CD4-positive, alpha-beta memory T cell (primary cell): ENCODE measurements at regions of chr10 and their contacts with region 1.

Region 1: DNA sequence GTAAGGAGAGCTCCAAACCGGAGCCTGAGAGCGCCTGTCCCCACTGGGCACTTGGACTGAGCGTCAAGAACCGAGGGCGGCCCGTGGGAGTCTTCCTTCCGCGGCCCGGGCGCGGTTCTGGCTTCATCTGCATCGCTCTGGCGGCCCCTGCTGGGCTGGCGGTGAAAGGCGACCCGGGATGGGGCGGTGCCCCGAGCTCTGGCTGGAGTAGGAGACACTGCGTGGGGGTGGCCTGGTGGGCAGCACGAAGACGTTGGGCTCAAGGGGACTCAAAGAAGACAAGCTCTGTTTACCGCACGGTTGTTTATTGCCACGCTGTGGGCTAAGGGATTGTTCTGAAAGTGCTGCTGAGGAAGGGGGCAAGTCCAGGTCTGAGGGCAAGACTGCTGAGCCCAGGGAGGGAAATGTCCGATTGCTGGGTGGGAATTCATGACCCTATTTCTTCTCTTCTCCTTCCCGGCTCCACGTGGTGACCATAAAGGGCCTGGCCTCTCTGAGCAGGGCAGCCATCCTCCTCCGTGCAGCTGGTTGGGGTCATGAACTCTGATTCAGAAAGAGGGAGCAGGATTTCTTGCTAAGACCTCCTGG is 29.8 kb downstream of the PLAU start:
- DNase-seq: peak; percentile 78 to 85 (median 79)
- H3K4me3 ChIP-seq: no peak overlapping the region
- H3K4me3 Mint-ChIP-seq: peak overlapping the region in 7 of 8 donors; percentile 49 to 79 (median 66)
- H3K27ac ChIP-seq: no peak overlapping the region
- H3K27ac Mint-ChIP-seq: peak overlapping the region in 5 of 7 donors; percentile 37 to 82 (median 74)
- H3K4me1 ChIP-seq: peaks cover 10% of the 10 kb centered on the region
- H3K4me1 Mint-ChIP-seq: peaks cover 6 to 9% (median 8%) of the 10 kb centered on the region in 4 donors
- H3K27me3 ChIP-seq: no peaks in the 10 kb centered on the region
- H3K27me3 Mint-ChIP-seq: peaks cover 0 to 2% of the 10 kb centered on the region in 2 donors

Region 2: GRCh38 chr10:73827346-73828089 is 113.2 kb before region 1 on chr10:
- CTCF ChIA-PET with region 1: interaction called, 10 read pairs
- POLR2A ChIA-PET with region 1: no interaction called
- intact Hi-C with region 1: no loop called
- DNase-seq: no peak
- H3K4me3 ChIP-seq: no peak overlapping the region
- H3K4me3 Mint-ChIP-seq: no peak overlapping the region
- H3K27ac ChIP-seq: no peak overlapping the region
- H3K27ac Mint-ChIP-seq: peak overlapping the region in 1 of 7 donors; percentile 29
- H3K4me1 ChIP-seq: no peaks in the 10 kb centered on the region
- H3K4me1 Mint-ChIP-seq: peaks cover 0 to under 1% (median 0%) of the 10 kb centered on the region in 4 donors
- H3K27me3 ChIP-seq: no peaks in the 10 kb centered on the region
- H3K27me3 Mint-ChIP-seq: no peaks in the 10 kb centered on the region

Region 3: GRCh38 chr10:73857446-73857845 is 83.3 kb before region 1 on chr10:
- CTCF ChIA-PET with region 1: interaction called, 18 read pairs
- POLR2A ChIA-PET with region 1: no interaction called
- intact Hi-C with region 1: no loop called
- DNase-seq: peak in 1 of 5 donors; percentile 58
- H3K4me3 ChIP-seq: no peak overlapping the region
- H3K4me3 Mint-ChIP-seq: peak overlapping the region; percentile 20 to 84 (median 39)
- H3K27ac ChIP-seq: no peak overlapping the region
- H3K27ac Mint-ChIP-seq: peak overlapping the region; percentile 81 to 91 (median 86)
- H3K4me1 ChIP-seq: peaks cover 53% of the 10 kb centered on the region
- H3K4me1 Mint-ChIP-seq: peaks cover 36 to 72% (median 50%) of the 10 kb centered on the region in 4 donors
- H3K27me3 ChIP-seq: no peaks in the 10 kb centered on the region
- H3K27me3 Mint-ChIP-seq: no peaks in the 10 kb centered on the region

Region 4: DNA sequence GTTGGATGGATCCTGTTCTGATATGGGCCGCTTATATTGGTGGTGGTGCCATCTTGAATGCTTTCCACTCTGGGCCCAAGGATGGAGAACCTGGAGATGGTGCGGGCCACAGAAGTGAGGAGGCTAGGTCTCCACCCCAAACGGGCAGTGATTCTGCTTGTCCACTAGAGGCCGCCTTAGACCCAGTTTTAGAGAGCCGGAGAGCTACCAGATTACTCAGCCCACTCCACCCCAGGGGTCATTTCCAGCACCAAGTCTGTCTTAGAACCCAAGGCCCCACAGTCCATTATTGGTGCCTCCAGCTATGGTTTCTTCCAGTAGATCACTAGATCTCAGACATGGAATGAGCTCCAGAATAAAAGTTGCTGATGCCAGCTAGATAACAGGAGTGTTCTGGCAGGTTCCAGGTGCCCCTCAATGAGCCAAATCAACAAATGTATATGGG is 54.6 kb before region 1 on chr10:
- CTCF ChIA-PET with region 1: interaction called, 726 read pairs
- POLR2A ChIA-PET with region 1: interaction called, 29 read pairs
- intact Hi-C with region 1: loop called (anchors 1 kb)
- DNase-seq: peak; percentile 67 to 76 (median 68)
- H3K4me3 ChIP-seq: no peak overlapping the region
- H3K4me3 Mint-ChIP-seq: peak overlapping the region in 1 of 8 donors; percentile 22
- H3K27ac ChIP-seq: no peak overlapping the region
- H3K27ac Mint-ChIP-seq: peak overlapping the region in 3 of 7 donors; percentile 64 to 70 (median 65)
- H3K4me1 ChIP-seq: peaks cover 9% of the 10 kb centered on the region
- H3K4me1 Mint-ChIP-seq: peaks cover 5 to 9% (median 6%) of the 10 kb centered on the region in 4 donors
- H3K27me3 ChIP-seq: no peaks in the 10 kb centered on the region
- H3K27me3 Mint-ChIP-seq: no peaks in the 10 kb centered on the region

Region 5: GRCh38 chr10:73920089-73920488 is 20.6 kb before region 1 on chr10:
- CTCF ChIA-PET with region 1: interaction called, 39 read pairs
- POLR2A ChIA-PET with region 1: interaction called, 3 read pairs
- intact Hi-C with region 1: no loop called
- DNase-seq: no peak
- H3K4me3 ChIP-seq: no peak overlapping the region
- H3K4me3 Mint-ChIP-seq: peak overlapping the region in 3 of 8 donors; percentile 40 to 62 (median 57)
- H3K27ac ChIP-seq: no peak overlapping the region
- H3K27ac Mint-ChIP-seq: peak overlapping the region in 1 of 7 donors; percentile 70
- H3K4me1 ChIP-seq: peaks cover 32% of the 10 kb centered on the region
- H3K4me1 Mint-ChIP-seq: peaks cover 23 to 41% (median 26%) of the 10 kb centered on the region in 4 donors
- H3K27me3 ChIP-seq: no peaks in the 10 kb centered on the region
- H3K27me3 Mint-ChIP-seq: peaks cover 4 to 8% of the 10 kb centered on the region in 2 donors

Region 6: GRCh38 chr10:73974309-73974946 is 33.7 kb after region 1 on chr10:
- CTCF ChIA-PET with region 1: interaction called, 12 read pairs
- POLR2A ChIA-PET with region 1: interaction called, 6 read pairs
- intact Hi-C with region 1: no loop called
- DNase-seq: peak in 4 of 5 donors; percentile 43 to 60 (median 48)
- H3K4me3 ChIP-seq: no peak overlapping the region
- H3K4me3 Mint-ChIP-seq: peak overlapping the region; percentile 21 to 70 (median 56)
- H3K27ac ChIP-seq: no peak overlapping the region
- H3K27ac Mint-ChIP-seq: peak overlapping the region; percentile 1 to 75 (median 37)
- H3K4me1 ChIP-seq: peaks cover 24% of the 10 kb centered on the region
- H3K4me1 Mint-ChIP-seq: peaks cover 15 to 37% (median 22%) of the 10 kb centered on the region in 4 donors
- H3K27me3 ChIP-seq: no peaks in the 10 kb centered on the region
- H3K27me3 Mint-ChIP-seq: no peaks in the 10 kb centered on the region

Region 7: GRCh38 chr10:74035303-74035702 is 94.6 kb after region 1 on chr10:
- CTCF ChIA-PET with region 1: interaction called, 20 read pairs
- POLR2A ChIA-PET with region 1: no interaction called
- intact Hi-C with region 1: no loop called
- DNase-seq: peak in 1 of 5 donors; percentile 14
- H3K4me3 ChIP-seq: no peak overlapping the region
- H3K4me3 Mint-ChIP-seq: no peak overlapping the region
- H3K27ac ChIP-seq: no peak overlapping the region
- H3K27ac Mint-ChIP-seq: peak overlapping the region in 6 of 7 donors; percentile 31 to 90 (median 80)
- H3K4me1 ChIP-seq: peaks cover 41% of the 10 kb centered on the region
- H3K4me1 Mint-ChIP-seq: peaks cover 43 to 64% (median 48%) of the 10 kb centered on the region in 4 donors
- H3K27me3 ChIP-seq: no peaks in the 10 kb centered on the region
- H3K27me3 Mint-ChIP-seq: no peaks in the 10 kb centered on the region

Region 8: DNA sequence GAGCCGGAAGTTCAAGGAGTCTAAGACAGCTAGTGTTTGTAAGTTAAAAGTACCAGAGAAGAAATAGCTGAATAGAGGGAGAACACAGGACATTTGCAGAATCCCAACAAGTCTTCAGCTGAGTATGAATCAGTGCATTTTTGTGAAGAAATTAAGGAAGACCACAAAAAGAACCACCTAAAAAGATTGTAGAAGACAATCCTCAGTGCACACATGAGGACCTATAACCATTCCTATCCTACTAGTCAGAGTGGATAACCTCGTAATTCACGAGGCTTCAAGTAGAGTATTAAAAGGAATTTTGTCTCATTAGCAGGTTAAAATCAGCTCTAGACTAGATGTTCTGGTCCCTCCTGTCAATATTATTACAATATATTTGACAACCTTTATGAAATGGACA is 590.3 kb after region 1 on chr10:
- CTCF ChIA-PET with region 1: no interaction called
- POLR2A ChIA-PET with region 1: no interaction called
- intact Hi-C with region 1: no loop called
- DNase-seq: no peak
- H3K4me3 ChIP-seq: no peak overlapping the region
- H3K4me3 Mint-ChIP-seq: no peak overlapping the region
- H3K27ac ChIP-seq: no peak overlapping the region
- H3K27ac Mint-ChIP-seq: no peak overlapping the region
- H3K4me1 ChIP-seq: no peaks in the 10 kb centered on the region
- H3K4me1 Mint-ChIP-seq: peaks cover 0 to 2% (median under 1%) of the 10 kb centered on the region in 4 donors
- H3K27me3 ChIP-seq: no peaks in the 10 kb centered on the region
- H3K27me3 Mint-ChIP-seq: no peaks in the 10 kb centered on the region